RWPE1 (cell line): ENCODE measurements at regions of chr13 and their contacts with region 1.

Region 1: DNA sequence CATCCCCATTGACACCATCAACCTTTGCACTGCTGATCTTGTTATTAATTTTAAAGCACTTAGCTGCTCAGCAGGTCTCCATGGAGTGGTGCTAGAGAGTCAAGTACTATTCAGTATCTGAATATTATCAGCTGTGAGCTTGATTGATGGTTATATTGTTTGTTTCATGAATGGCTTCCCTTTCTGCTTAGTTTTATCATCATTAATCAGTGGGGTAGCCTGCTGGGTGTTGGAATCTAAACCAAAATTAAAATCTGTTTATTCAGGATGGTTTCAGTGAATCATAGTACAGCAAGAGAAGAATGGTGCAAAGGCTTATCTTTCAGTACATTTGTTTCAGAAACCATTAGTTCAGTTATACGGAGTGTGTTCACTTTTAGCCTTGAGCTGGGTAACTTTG is 42.5 kb upstream of the SCEL start:
- DNase-seq: peak; percentile 55
- H3K27ac ChIP-seq: no peak overlapping the region
- CTCF ChIP-seq: peak; percentile 64

Region 2: DNA sequence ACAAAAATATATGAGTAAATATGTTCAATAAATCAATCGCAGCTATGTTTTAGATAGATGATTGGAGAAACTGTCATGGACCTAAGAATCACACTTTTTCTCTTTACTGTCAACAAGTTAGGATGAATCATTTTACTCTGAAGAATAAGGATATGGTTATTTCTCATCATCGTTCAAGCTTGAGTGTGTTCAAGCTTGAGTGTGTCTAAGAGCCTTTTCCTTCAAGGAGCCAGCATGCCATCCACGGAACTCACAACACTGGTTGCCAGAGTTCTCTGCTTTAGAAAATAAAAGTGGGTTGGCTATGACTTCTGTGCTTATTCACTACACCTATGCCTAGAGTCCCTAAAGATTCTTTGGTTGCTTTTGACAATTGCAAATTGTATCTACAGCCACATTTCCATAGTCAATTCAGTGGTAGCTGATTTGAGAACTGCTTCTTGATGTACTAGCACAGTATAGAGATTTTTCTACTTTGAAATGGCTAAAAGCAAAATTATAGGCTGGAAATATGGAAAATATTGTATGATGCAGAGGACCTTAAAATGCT is 15.6 kb before region 1 on chr13:
- CTCF ChIA-PET with region 1: interaction called, 13 read pairs
- POLR2A ChIA-PET with region 1: no interaction called
- DNase-seq: no peak
- H3K27ac ChIP-seq: no peak overlapping the region
- CTCF ChIP-seq: no peak

Region 3: GRCh38 chr13:77544758-77545338 is 51.9 kb after region 1 on chr13:
- CTCF ChIA-PET with region 1: no interaction called
- POLR2A ChIA-PET with region 1: no interaction called
- DNase-seq: no peak
- H3K27ac ChIP-seq: peak overlapping the region; percentile 66
- CTCF ChIP-seq: no peak

Region 4: GRCh38 chr13:77565635-77566034 is 72.7 kb after region 1 on chr13:
- CTCF ChIA-PET with region 1: interaction called, 15 read pairs
- POLR2A ChIA-PET with region 1: no interaction called
- DNase-seq: peak; percentile 43
- H3K27ac ChIP-seq: no peak overlapping the region
- CTCF ChIP-seq: peak; percentile 65

Region 5: DNA sequence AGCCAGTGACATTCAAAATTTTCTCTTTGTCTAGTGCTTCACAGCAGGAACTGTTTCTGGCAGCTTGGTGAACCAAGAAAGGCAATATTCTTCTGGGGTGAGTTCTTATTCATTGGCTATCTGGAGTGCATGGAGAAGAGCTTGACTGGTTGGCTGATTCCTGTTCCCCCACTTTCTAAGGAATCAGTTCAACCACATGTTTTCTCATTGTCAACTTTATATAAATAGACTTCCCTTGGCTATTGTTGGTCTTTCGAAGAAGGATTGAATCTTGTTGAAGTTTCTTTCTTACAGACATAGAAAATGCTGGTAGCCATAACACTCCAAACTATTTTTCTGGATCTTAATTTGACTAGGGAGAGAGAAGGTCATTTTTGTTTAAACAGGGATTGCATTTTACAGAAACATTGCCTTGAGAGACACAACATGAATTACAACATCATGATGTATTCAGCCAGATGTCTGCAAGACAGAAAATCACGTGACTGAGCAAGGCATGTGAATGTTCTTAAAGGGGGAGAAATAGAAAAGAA is 340.4 kb after region 1 on chr13:
- CTCF ChIA-PET with region 1: no interaction called
- POLR2A ChIA-PET with region 1: no interaction called
- DNase-seq: no peak
- H3K27ac ChIP-seq: no peak overlapping the region
- CTCF ChIP-seq: no peak